Prostate gland (tissue), 2 donors: ENCODE measurements at regions of chr19 and their contacts with region 1.

Region 1: DNA sequence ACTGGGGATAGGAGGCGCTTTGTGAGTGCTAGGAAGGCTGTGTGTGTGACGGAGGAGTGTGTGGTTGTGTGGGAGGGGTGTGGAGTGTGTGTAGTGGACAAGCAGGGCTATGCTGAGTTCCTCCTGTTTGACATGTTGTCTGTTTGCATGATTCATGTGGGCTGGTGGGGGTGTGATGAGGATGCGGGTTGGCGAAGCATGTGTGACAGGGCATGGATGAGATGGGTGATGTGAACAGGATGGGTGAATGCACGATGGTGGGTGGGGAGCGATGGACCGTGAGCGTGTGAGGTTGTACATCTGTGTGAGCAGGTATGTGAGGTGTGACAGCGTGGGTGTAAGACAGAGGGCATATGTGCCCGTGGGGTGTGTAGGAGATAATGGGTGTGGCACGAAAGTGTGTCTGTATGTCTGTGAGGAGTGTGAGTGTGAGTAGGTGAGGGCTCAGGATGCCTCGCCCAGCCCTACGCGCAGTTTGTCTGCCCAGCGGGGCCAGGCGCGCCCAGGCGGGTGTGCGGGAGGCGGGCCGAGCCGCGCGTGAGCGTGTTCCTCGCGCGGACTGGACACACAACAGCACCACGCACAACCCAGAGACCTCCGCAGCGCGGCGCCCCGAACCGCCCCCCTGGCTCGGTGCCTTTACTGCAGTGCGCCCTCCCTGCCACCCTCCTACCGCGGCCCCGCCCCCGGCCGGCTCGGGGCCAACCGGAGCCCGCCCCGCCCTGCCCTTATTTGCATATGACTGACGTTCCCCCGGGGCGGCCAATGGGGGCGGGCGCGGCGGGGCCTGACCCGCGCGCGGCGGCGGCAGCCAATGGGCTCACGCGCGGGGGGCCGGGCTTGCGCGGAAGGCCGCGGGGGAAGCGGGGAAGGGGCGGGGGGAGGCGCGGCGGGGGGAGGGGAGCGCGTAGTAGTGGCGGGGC is 14.4 kb downstream of the CIC start:
- DNase-seq: peak; percentile 96
- H3K4me3 ChIP-seq: peak overlapping the region; percentile 54 to 72
- H3K27ac ChIP-seq: peak overlapping the region; percentile 91 to 98
- H3K4me1 ChIP-seq: peaks cover 46% of the 10 kb centered on the region
- H3K27me3 ChIP-seq: no peaks in the 10 kb centered on the region
- CTCF ChIP-seq: peak in 2 of 4 experiments; percentile 12 to 29
- POLR2A ChIP-seq: peak; percentile 98

Region 2: DNA sequence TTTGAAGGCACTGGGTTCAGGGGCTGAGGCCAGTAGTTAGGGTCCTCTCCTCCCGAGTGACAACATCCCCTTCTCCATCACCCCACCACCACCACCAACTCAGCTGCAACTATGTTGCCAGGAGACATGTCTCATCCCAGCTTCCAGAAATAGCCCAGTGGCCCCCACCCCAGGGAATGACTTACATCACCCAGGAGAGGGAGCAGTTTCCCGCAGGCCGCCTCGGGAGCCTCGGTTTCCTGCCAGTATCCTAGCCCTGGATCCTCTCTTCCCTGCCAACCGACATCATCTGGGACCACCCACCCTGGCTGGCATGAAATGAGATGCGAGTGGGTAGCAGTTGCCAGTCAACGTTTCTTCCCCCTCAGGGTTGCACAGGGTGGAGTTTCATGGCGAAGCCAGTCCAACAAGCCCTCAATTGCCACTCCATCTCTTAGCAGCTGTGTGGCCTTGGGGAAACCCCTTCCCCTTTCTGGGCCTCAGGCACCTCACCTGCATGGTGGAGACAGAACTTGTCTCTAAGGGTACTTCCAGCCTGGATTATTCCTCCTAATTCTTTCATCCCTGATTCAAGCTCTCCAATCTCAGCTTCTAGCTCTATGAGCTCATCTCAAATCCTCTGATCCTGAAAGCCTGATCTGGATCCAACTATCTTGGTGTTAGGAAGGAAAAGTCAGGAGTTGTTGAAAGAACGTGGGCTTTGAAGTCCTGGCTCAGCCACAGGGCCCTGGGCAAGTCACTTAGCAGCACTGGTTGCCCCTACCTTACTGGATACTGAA is 37.1 kb before region 1 on chr19:
- intact Hi-C with region 1: loop called (anchors 2 kb)
- DNase-seq: no peak
- H3K4me3 ChIP-seq: no peak overlapping the region
- H3K27ac ChIP-seq: peak overlapping the region in 1 of 2 donors; percentile 21
- H3K4me1 ChIP-seq: peaks cover 12% of the 10 kb centered on the region
- H3K27me3 ChIP-seq: no peaks in the 10 kb centered on the region
- CTCF ChIP-seq: peak; percentile 26 to 87 (median 66)
- POLR2A ChIP-seq: no peak

Region 3: GRCh38 chr19:42254989-42255765 is 28.2 kb before region 1 on chr19 and contains the start of gene ERF:
- intact Hi-C with region 1: loop called (anchors 1 kb)
- DNase-seq: peak; percentile 91
- H3K4me3 ChIP-seq: peak within 1 kb of the TSS; percentile 98
- H3K27ac ChIP-seq: peak within 1 kb of the TSS; percentile 98
- H3K4me1 ChIP-seq: peaks cover 14% of the 10 kb centered on the region
- H3K27me3 ChIP-seq: no peaks in the 10 kb centered on the region
- CTCF ChIP-seq: peak in 2 of 4 experiments; percentile 26 to 39
- POLR2A ChIP-seq: peak; percentile 100
- total RNA-seq, gene ERF: 33.9 to 121 TPM

Region 4: DNA sequence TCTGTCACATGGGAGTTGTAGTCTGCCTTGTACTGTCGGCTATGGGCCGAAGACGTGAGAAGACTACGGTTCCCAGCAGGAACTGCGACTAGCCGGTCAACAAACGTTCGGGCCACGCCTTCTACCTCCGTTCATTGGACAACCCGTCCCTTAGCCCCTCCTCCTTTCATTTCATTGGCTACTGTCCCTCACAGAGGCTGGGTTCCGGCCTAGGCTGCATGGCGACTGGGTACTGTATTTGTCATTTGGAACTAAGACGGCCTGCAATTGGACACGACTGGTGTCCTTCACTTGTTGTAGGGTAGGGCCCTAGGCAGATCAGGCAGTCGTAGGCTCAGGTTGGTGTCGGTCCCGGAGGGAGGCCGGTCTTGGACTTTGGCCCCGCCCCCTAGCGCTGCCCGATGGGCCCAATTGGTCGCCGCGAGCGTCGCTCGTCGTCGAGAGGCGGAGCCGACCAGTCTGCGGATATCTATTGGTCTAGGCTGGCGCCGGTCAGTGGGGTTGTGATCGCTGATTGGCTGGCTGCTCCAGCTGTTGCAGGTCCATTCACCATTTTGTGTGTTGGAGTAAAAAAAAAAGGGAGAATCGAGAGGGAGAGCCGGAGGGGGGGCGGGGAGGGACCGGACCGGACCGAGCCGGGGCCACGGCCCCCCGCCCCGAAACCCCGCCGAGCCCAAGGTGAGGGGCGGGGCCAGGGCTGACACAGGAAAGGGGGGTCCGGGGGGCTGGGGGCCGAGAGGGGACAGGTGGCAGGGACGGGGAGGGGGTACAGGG is 14.5 kb before region 1 on chr19 and contains the start of gene CIC:
- intact Hi-C with region 1: loop called (anchors 2 kb)
- DNase-seq: peak; percentile 100
- H3K4me3 ChIP-seq: peak within 1 kb of the TSS; percentile 61 to 80
- H3K27ac ChIP-seq: peak within 1 kb of the TSS; percentile 97 to 99
- H3K4me1 ChIP-seq: peaks cover 5% of the 10 kb centered on the region
- H3K27me3 ChIP-seq: no peaks in the 10 kb centered on the region
- CTCF ChIP-seq: no peak
- POLR2A ChIP-seq: peak; percentile 58
- total RNA-seq, gene CIC: 64.6 to 145 TPM